Psoas muscle (tissue), 8 donors: ENCODE measurements at regions of chr11 and their contacts with region 1.

Region 1: DNA sequence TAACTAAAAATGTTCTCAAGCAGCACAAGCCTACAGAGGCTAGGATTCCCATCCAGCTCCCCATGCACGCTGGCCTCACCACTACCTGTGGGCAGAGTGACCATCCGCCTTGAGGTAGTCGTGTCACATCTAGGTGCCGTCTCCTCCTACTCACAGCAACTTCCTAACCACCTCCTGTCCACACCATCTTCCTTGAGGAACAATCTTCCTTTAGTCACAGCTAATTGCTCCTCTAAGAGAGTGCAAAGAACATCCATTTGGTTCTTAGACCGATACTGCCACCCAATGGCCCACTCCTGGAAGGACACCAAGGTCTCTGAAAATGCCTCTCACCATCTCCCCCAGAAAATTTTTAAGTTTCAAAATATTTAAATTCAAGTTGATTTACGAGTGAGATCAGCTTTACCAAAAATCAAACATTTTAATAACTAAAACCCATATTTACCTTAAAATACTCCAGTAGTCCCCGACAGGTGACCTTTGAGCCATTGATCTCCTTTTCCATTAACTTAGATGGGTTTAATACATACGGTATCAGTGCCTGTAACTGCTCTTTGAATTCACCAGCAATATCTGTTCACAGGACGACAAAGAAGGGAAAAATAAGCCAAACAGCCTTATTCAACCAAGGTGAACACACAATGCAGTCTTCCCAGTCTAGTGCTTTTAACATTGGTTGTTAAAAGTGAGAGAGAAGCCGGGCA is 21.7 kb upstream of the PLAAT3 start:
- DNase-seq: peak; percentile 30 to 58
- ATAC-seq: peak; percentile 66 to 86 (median 78)
- H3K4me3 ChIP-seq: no peak overlapping the region
- H3K27ac ChIP-seq: no peak overlapping the region
- H3K4me1 ChIP-seq: no peaks in the 10 kb centered on the region
- H3K27me3 ChIP-seq: no peaks in the 10 kb centered on the region
- CTCF ChIP-seq: peak; percentile 83

Region 2: GRCh38 chr11:63478896-63479295 is 157.0 kb before region 1 on chr11:
- intact Hi-C with region 1: loop called (anchors 1 to 2 kb)
- DNase-seq: no peak
- ATAC-seq: peak; percentile 78 to 88 (median 80)
- H3K4me3 ChIP-seq: no peak overlapping the region
- H3K27ac ChIP-seq: no peak overlapping the region
- H3K4me1 ChIP-seq: no peaks in the 10 kb centered on the region
- H3K27me3 ChIP-seq: no peaks in the 10 kb centered on the region
- CTCF ChIP-seq: peak; percentile 91

Region 3: DNA sequence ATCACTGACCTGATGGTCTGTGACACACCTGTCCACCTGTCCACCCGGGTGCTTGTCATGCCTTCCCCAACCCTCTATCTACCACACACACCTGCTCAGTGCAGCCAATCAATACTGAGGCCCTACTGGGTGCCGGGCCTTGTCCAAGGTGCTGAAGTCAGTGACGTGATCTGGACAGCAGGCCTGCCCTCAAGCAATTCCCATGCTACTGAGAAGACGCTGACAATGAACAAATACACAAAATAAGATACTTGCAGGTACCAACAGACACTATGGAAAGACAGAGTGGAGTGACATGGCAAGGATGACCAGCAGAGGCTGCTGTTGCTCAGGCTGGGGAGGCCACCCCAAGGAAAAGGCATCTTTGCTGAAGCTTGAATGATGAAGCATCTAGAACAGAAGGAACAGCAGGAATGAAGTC is 42.9 kb before region 1 on chr11:
- intact Hi-C with region 1: loop called in 1 of 2 experiments (anchors 5 kb)
- DNase-seq: no peak
- ATAC-seq: peak in 3 of 4 donors; percentile 21 to 54 (median 46)
- H3K4me3 ChIP-seq: no peak overlapping the region
- H3K27ac ChIP-seq: no peak overlapping the region
- H3K4me1 ChIP-seq: no peaks in the 10 kb centered on the region
- H3K27me3 ChIP-seq: no peaks in the 10 kb centered on the region
- CTCF ChIP-seq: peak; percentile 37

Region 4: DNA sequence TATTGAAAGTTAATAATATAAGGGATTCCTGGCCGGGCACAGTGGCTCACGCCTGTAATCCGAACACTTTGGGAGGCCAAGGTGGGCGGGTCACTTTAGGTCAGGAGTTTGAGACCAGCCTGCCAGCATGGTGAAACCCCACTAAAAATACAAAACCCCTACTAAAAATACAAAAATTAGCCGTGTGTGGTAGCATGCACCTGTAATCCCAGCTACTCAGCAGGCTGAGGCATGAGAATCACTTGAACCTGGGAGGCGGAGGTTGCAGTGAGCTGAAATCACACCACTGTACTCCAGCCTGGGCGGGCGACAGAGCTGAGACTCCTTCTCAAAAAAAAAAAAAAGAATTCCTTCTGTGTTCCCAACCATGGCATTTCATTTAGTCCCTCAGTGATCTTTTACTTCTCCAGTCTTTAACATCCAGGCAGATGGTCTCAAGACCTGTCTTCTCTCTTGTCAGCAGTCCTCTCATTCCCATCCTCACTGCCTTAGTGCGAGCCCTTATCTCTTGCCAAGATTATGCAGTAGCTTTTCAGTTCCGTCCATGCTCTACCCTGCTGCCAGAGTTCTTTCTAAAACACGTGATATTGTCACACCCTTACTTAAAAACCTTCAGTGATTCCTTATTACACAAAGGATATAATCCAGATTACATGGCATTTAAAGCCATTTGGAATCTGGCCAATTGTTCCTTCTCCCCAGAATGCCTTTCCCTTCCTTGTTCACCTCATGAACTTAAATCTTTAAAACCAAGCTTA is 63.2 kb after region 1 on chr11:
- intact Hi-C with region 1: no loop called
- DNase-seq: no peak
- ATAC-seq: peak in 2 of 4 donors; percentile 57 to 62
- H3K4me3 ChIP-seq: no peak overlapping the region
- H3K27ac ChIP-seq: no peak overlapping the region
- H3K4me1 ChIP-seq: peaks cover 20% of the 10 kb centered on the region
- H3K27me3 ChIP-seq: no peaks in the 10 kb centered on the region
- CTCF ChIP-seq: no peak

Region 5: DNA sequence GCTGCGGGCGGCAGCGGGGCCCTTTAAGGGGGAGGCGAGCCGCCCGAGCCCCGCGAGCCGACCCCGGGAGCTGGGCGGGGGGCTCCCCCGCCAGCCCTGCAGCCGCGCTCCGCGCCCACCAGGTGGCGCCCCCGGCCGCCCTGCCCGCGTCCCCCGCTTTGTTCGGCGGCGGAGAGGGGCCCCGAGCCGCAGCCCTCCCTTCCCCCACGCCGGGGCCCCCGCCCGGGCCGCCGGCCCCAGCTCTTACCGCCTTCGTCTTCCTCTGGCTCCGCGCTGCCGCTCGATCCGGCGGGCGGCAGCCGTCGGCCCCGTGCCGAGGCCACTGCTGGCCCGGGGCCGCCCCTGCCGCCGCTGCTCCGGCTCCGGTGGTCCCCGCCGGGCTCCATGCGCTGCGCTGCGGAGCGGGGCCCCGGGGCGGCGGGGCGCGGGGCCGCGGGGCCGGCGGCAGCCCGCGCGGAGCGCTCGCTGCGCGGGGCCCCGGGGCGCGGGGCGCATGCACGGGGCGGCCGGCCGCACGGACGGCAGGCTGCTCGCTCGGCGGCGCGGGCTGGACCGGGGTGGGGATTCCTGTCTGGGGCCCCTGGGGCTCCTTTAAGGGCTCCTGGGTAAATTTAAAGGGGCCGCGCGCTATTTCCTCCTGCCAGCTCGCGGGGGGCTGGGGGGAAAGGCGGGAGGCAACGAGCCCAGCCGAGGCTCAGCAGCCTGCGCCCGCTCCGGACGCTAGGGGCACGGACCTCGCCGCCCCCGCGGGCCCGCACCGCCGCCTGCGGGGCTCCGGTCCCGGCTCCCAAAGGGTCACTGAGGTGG is 132.5 kb after region 1 on chr11 and contains the start of gene ZFTA:
- intact Hi-C with region 1: no loop called
- DNase-seq: peak; percentile 64 to 80
- ATAC-seq: peak; percentile 42 to 69 (median 66)
- H3K4me3 ChIP-seq: peak within 1 kb of the TSS; percentile 87
- H3K27ac ChIP-seq: peak within 1 kb of the TSS; percentile 77
- H3K4me1 ChIP-seq: peaks cover 5% of the 10 kb centered on the region
- H3K27me3 ChIP-seq: no peaks in the 10 kb centered on the region
- CTCF ChIP-seq: peak; percentile 87
- total RNA-seq, gene ZFTA: 4.4 to 10.9 (median 7.8) TPM